Activated T-helper 2 cell treated with anti-CD3 and anti-CD28 coated beads, Interferon-gamma antibody, Interleukin-2, Interleukin-4, amounts not matched to agents 10 μg/mL and 5 μg/mL and 100 μg/mL, durations not matched to agents 14 hours and 24 hours and 36 hours (primary cell): ENCODE measurements at regions of chr19 and their contacts with region 1.

Region 1: DNA sequence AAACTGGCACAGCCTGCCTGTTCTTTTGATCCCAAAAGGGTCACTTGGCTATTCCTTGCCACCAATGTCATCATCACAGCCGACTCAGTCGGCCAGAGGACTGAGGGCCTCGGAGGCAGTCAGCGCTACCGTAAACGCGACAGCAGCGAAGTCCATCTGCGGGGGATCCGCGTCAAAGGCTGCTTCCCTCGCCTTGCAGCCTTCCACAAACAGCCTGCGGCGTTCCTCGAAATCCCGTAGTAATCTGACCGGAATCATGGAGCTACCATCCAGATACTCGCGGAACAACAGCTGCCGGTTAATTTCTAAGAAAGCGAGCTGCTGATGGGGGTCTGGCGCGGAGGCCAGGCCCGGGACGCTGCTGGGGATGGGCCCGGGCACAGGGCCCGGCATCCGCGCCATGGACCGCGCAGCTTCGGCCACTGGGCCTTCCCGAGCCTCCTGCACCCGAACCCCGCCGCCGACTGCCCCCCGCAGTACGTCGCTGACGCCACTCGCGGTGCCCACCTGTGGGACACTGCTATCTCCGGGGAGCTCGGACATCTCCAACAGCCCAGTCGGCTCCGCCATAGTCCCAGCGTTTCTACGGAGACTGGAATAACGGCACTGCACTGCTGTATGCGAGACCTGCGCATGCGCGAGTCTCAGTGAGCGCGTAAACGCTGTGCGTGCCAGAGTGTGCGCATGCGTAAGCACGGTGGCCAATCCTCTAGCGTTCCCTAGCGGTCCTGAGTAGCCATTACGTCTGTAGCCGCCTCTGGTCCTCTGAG is at the start of gene EID2B:
- DNase-seq: peak; percentile 93
- H3K4me3 Mint-ChIP-seq: peak within 1 kb of the TSS; percentile 93
- H3K27ac Mint-ChIP-seq: peak within 1 kb of the TSS; percentile 80
- H3K4me1 Mint-ChIP-seq: peaks cover 12% of the 10 kb centered on the region
- H3K27me3 Mint-ChIP-seq: no peaks in the 10 kb centered on the region
- total RNA-seq, gene EID2B: 3.5 and 4.1 TPM in 2 replicates

Region 2: DNA sequence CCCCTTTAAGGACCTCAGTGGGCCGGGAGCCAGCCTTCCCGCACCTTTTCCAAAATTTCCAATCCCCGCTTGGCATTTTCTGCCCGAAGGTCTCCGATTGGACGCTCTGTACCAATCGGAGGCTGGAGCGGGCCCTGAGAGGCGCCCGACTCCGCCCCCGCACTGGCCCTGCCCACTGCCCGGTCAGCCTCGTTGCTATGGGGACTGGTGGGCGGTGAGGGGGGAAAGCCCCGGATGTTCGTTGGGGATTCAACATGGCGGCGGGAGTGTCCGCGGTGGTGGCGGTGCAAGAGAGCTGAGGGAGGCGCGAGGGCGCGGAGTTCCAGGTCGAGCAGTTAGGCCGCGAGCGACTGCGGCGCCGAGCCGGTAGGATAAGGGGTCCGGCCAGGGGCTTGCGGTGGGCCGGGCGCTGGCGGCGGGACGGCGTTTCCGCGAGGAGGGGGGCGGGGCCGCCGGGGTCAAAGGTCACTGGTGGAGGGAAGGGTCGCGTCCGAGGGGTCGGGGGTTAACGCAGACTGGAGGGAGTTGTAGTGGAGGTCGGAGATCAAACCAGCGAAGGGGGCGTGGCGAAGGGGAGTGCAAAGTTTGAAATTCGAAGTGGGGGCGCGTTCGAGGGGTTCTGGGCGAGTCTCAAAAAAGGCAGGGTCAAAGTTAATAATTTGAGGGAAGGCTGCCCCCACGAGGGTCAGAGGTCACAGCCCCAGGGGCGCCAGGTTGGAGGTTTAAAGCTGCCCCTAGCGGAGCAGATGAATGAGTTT is 406.7 kb before region 1 on chr19 and contains the start of gene PAK4:
- intact Hi-C with region 1: loop called (anchors 10 kb)
- DNase-seq: peak; percentile 95
- H3K4me3 Mint-ChIP-seq: peak within 1 kb of the TSS; percentile 90
- H3K27ac Mint-ChIP-seq: peak within 1 kb of the TSS; percentile 91
- H3K4me1 Mint-ChIP-seq: peaks cover 28% of the 10 kb centered on the region
- H3K27me3 Mint-ChIP-seq: peaks cover 3% of the 10 kb centered on the region
- total RNA-seq, gene PAK4: 16.5 and 19.4 TPM in 2 replicates

Region 3: GRCh38 chr19:39397360-39398296 is 134.8 kb before region 1 on chr19:
- intact Hi-C with region 1: loop called (anchors 5 kb)
- DNase-seq: peak; percentile 87
- H3K4me3 Mint-ChIP-seq: peak overlapping the region; percentile 46
- H3K27ac Mint-ChIP-seq: peak overlapping the region; percentile 83
- H3K4me1 Mint-ChIP-seq: peaks cover 45% of the 10 kb centered on the region
- H3K27me3 Mint-ChIP-seq: no peaks in the 10 kb centered on the region

Region 4: DNA sequence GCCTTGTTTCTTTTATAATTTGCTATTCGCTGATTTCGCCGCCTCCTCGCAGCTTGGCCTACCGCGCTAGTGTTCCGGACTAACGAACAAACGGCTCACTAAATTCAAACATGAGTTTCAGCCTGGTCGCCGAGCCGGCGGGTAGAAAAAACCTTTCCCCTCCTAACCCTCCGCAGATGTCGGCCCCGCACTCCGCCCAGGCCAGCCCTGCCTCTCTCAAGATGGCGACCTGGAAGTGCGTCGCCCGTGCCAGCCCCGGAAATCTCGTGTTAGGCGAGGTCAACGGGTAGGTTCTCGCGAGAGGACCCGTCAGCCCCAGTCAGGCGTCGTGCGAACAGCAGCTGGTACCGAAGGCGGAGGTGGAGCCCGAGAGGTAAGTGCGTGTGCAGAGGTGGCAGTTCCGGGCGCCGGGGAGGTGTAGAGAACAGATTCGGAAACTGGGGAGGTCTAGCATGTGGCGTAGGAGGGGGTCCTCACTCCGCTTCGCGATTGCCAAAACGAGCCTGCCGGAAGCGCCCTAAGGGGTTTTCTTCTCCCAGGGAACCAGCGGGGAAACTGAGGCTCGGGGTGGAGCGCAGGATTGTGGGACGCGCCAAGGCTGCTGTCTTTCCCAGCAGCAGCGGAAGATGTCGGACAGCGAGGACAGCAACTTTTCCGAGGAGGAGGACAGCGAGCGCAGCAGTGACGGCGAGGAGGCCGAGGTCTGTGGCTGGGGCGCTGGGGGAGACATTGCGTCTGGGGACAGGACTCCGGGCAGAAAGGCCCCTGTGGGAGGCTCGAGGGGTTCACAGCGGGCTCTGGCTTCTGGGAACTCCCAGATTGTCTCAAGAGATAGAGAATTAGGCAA is 86.9 kb before region 1 on chr19 and contains the start of gene SUPT5H:
- intact Hi-C with region 1: loop called (anchors 1 kb)
- DNase-seq: peak; percentile 98
- H3K4me3 Mint-ChIP-seq: peak within 1 kb of the TSS; percentile 95
- H3K27ac Mint-ChIP-seq: peak within 1 kb of the TSS; percentile 94
- H3K4me1 Mint-ChIP-seq: peaks cover 34% of the 10 kb centered on the region
- H3K27me3 Mint-ChIP-seq: no peaks in the 10 kb centered on the region
- total RNA-seq, gene SUPT5H: 163 and 169 TPM in 2 replicates

Region 5: DNA sequence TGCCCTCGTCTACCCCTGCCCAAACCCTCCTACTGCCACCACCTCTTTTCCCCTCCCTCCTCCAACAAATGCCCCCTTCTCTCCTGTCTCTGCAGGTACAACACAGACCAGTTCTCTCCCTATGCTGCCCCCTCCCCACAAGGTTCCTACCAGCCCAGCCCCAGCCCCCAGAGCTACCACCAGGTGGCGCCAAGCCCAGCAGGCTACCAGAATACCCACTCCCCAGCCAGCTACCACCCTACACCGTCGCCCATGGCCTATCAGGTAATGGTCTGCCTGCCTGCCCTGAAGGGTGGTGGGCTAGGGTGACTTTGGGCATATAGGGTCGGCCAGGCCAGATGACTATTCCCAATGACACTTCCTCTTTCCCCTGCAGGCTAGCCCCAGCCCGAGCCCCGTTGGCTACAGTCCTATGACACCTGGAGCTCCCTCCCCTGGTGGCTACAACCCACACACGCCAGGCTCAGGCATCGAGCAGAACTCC is 58.2 kb before region 1 on chr19:
- intact Hi-C with region 1: loop called (anchors 1 kb)
- DNase-seq: peak; percentile 57
- H3K4me3 Mint-ChIP-seq: no peak overlapping the region
- H3K27ac Mint-ChIP-seq: no peak overlapping the region
- H3K4me1 Mint-ChIP-seq: peaks cover 13% of the 10 kb centered on the region
- H3K27me3 Mint-ChIP-seq: no peaks in the 10 kb centered on the region

Region 6: GRCh38 chr19:39480337-39481228 is 51.8 kb before region 1 on chr19 and contains the start of gene TIMM50:
- intact Hi-C with region 1: loop called (anchors 2 kb)
- DNase-seq: peak; percentile 96
- H3K4me3 Mint-ChIP-seq: peak within 1 kb of the TSS; percentile 97
- H3K27ac Mint-ChIP-seq: peak within 1 kb of the TSS; percentile 84
- H3K4me1 Mint-ChIP-seq: peaks cover 24% of the 10 kb centered on the region
- H3K27me3 Mint-ChIP-seq: no peaks in the 10 kb centered on the region
- total RNA-seq, gene TIMM50: 110 and 115 TPM in 2 replicates

Region 7: DNA sequence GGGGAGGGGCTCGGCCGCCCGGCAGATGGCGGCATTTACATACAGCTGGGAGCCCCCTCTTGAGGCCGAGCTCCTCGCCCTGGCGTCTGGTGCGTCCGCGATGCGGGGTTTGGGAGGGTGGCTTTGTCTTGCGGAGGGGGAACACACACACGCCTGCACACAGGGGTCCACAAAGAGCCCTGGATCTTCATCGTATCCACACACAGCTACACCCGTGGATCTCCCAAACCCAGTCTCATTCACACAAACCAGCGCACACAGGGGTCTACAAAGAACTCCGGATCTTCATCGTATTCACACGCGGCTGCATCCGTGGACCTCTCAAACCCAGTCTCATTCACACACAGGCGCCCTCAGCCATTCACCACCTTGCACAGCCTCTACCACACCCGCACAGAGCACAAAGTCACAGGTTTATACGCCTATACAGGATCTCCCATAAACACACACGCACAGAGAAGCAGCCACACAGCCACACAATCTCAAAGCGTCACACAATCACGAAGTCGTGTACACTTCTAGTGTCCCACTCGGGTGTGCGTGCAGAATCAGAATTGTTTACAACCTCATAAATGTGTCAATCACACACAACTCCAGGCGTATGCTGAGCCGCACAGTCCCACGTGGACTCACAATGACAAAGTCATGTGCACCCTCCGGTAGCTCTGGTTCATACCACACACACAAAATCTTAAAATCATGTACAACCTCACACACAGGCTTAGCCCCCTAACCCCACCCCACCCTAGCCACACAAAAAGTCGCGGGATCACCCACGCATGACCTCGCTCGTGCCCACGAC is 34.2 kb before region 1 on chr19:
- intact Hi-C with region 1: loop called (anchors 5 kb)
- DNase-seq: no peak
- H3K4me3 Mint-ChIP-seq: peak overlapping the region; percentile 34
- H3K27ac Mint-ChIP-seq: no peak overlapping the region
- H3K4me1 Mint-ChIP-seq: peaks cover 15% of the 10 kb centered on the region
- H3K27me3 Mint-ChIP-seq: peaks cover 43% of the 10 kb centered on the region

Region 8: GRCh38 chr19:39568604-39569003 is 36.2 kb after region 1 on chr19:
- intact Hi-C with region 1: no loop called
- DNase-seq: no peak
- H3K4me3 Mint-ChIP-seq: no peak overlapping the region
- H3K27ac Mint-ChIP-seq: no peak overlapping the region
- H3K4me1 Mint-ChIP-seq: peaks cover 3% of the 10 kb centered on the region
- H3K27me3 Mint-ChIP-seq: peaks cover 11% of the 10 kb centered on the region